Astrocyte of the cerebellum (primary cell): ENCODE measurements at regions of chr2 and their contacts with region 1.

Region 1: GRCh38 chr2:26072925-26073768 is 39.3 kb downstream of the RAB10 start:
- DNase-seq: no peak
- H3K4me3 ChIP-seq: no peak overlapping the region
- CTCF ChIP-seq: no peak

Region 2: GRCh38 chr2:26008822-26009566 is 64.2 kb before region 1 on chr2:
- in situ Hi-C with region 1: loop called (anchors 5 kb)
- DNase-seq: no peak
- H3K4me3 ChIP-seq: no peak overlapping the region
- CTCF ChIP-seq: no peak

Region 3: DNA sequence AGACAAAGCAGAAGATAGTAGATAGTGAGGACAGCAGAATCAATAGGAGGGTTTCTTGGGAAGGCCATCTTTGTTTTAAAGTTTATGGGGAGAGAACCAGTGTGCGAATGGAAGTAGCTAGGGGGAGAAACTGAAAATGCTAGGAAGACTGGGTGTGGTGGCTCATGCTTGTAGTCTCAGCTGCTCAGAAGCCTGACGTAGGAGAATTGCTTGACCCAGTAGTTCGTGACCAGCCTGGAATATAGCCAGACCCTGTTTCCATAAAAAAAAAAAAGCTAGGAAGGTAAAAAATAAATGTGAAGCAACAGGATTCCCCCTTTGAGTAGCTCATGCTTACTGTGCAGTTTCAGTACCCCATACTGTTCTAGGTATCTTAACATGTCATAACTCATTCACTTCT is 309.4 kb after region 1 on chr2:
- in situ Hi-C with region 1: no loop called
- DNase-seq: no peak
- H3K4me3 ChIP-seq: no peak overlapping the region
- CTCF ChIP-seq: no peak